ENCODE measurements at regions of chr1 and their contacts with region 1.

Region 1: GRCh38 chr1:93779540-93780192 is 98.0 kb upstream of the BCAR3 start:
- DNase-seq: peak; percentile 93 to 100
- H3K4me3 ChIP-seq: peak overlapping the region; percentile 15; the same call in 1 of the 2 replicates
- H3K27ac ChIP-seq: peak overlapping the region; percentile 95
- H3K4me1 ChIP-seq: peaks cover 77% of the 10 kb centered on the region
- H3K27me3 ChIP-seq: no peaks in the 10 kb centered on the region
- CTCF ChIP-seq: peak; percentile 31; the same call in 1 of the 2 replicates

Region 2: GRCh38 chr1:93661829-93662474 is 117.7 kb before region 1 on chr1:
- CTCF ChIA-PET with region 1: interaction called, 16 read pairs
- POLR2A ChIA-PET with region 1: no interaction called
- intact Hi-C with region 1: no loop called
- DNase-seq: peak; percentile 60 to 83
- H3K4me3 ChIP-seq: peak overlapping the region; percentile 1; the same call in 1 of the 2 replicates
- H3K27ac ChIP-seq: peak overlapping the region; percentile 86
- H3K4me1 ChIP-seq: peaks cover 74% of the 10 kb centered on the region
- H3K27me3 ChIP-seq: no peaks in the 10 kb centered on the region
- CTCF ChIP-seq: no peak

Region 3: GRCh38 chr1:93701619-93702018 is 78.0 kb before region 1 on chr1:
- CTCF ChIA-PET with region 1: no interaction called
- POLR2A ChIA-PET with region 1: no interaction called
- intact Hi-C with region 1: loop called (anchors 1 kb)
- DNase-seq: peak; percentile 97 to 100
- H3K4me3 ChIP-seq: no peak overlapping the region
- H3K27ac ChIP-seq: peak overlapping the region; percentile 97
- H3K4me1 ChIP-seq: peaks cover 68% of the 10 kb centered on the region
- H3K27me3 ChIP-seq: no peaks in the 10 kb centered on the region
- CTCF ChIP-seq: no peak

Region 4: DNA sequence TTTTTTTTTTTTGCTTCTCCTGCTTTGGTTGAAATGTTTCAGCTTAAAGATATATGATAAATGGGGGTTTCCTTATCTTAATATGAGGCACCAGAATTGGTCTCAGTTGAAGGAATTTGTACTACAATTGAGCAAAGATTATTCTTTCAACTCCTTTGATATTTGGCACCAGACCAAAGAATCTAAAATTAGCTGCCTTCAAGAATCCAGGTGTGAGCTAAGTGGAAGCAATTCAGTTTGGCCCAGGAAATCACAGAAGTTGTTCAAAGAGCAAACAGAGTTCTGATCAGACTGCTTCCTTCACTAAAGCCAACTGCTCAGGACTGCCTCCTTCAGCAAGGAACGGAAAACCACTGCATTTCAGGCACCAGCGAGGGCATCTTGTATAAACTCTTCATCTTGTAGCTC is 29.8 kb before region 1 on chr1:
- CTCF ChIA-PET with region 1: no interaction called
- POLR2A ChIA-PET with region 1: no interaction called
- intact Hi-C with region 1: loop called (anchors 1 kb)
- DNase-seq: peak in 1 of 2 experiments; percentile 82
- H3K4me3 ChIP-seq: no peak overlapping the region
- H3K27ac ChIP-seq: peak overlapping the region; percentile 49
- H3K4me1 ChIP-seq: peaks cover 53% of the 10 kb centered on the region
- H3K27me3 ChIP-seq: no peaks in the 10 kb centered on the region
- CTCF ChIP-seq: no peak; the same call in 1 of the 2 replicates

Region 5: GRCh38 chr1:93758842-93759515 is 20.7 kb before region 1 on chr1:
- CTCF ChIA-PET with region 1: no interaction called
- POLR2A ChIA-PET with region 1: no interaction called
- intact Hi-C with region 1: loop called (anchors 1 kb)
- DNase-seq: peak; percentile 60 to 97
- H3K4me3 ChIP-seq: peak overlapping the region; percentile 20; the same call in 1 of the 2 replicates
- H3K27ac ChIP-seq: peak overlapping the region; percentile 85
- H3K4me1 ChIP-seq: peaks cover 100% of the 10 kb centered on the region
- H3K27me3 ChIP-seq: no peaks in the 10 kb centered on the region
- CTCF ChIP-seq: no peak; the same call in 1 of the 2 replicates

Region 6: GRCh38 chr1:93807307-93807930 is 27.8 kb after region 1 on chr1:
- CTCF ChIA-PET with region 1: no interaction called
- POLR2A ChIA-PET with region 1: no interaction called
- intact Hi-C with region 1: no loop called
- DNase-seq: no peak
- H3K4me3 ChIP-seq: no peak overlapping the region
- H3K27ac ChIP-seq: no peak overlapping the region
- H3K4me1 ChIP-seq: peaks cover 51% of the 10 kb centered on the region
- H3K27me3 ChIP-seq: no peaks in the 10 kb centered on the region
- CTCF ChIP-seq: no peak

Region 7: DNA sequence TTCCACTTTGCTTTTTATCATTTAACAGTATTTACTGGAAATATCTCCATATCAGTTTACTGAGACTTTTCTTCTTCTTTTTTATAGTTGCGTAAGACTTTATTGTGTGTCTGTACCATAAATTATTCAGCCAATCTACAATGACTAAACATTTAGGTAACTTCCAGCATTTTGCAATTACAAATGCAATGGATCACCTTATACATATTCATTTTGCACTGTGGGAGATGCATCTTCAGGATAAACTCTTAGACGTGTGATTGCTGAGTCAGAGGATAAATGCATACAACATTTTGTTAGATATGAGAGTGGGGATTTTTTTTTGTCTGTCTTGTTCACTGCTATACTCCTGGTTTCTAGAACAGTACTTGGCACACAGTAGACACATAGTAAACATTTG is 225.3 kb after region 1 on chr1:
- CTCF ChIA-PET with region 1: no interaction called
- POLR2A ChIA-PET with region 1: interaction called, 12 read pairs
- intact Hi-C with region 1: no loop called
- DNase-seq: peak in 1 of 2 experiments; percentile 58
- H3K4me3 ChIP-seq: no peak overlapping the region
- H3K27ac ChIP-seq: no peak overlapping the region
- H3K4me1 ChIP-seq: peaks cover 12% of the 10 kb centered on the region
- H3K27me3 ChIP-seq: no peaks in the 10 kb centered on the region
- CTCF ChIP-seq: no peak